ENCODE measurements at regions of chr6 and their contacts with region 1.

Region 1: GRCh38 chr6:160088069-160088783 is 33.4 kb upstream of the SLC22A1 start:
- DNase-seq: peak; percentile 89
- ATAC-seq: peak; percentile 97
- H3K4me3 ChIP-seq: no peak overlapping the region
- H3K27ac ChIP-seq: no peak overlapping the region
- H3K4me1 ChIP-seq: peaks cover 5% of the 10 kb centered on the region; the same call in 1 of the 2 replicates
- H3K27me3 ChIP-seq: no peaks in the 10 kb centered on the region
- CTCF ChIP-seq: peak; percentile 92
- POLR2A ChIP-seq: no peak
- RAD21 ChIP-seq: peak; percentile 76

Region 2: DNA sequence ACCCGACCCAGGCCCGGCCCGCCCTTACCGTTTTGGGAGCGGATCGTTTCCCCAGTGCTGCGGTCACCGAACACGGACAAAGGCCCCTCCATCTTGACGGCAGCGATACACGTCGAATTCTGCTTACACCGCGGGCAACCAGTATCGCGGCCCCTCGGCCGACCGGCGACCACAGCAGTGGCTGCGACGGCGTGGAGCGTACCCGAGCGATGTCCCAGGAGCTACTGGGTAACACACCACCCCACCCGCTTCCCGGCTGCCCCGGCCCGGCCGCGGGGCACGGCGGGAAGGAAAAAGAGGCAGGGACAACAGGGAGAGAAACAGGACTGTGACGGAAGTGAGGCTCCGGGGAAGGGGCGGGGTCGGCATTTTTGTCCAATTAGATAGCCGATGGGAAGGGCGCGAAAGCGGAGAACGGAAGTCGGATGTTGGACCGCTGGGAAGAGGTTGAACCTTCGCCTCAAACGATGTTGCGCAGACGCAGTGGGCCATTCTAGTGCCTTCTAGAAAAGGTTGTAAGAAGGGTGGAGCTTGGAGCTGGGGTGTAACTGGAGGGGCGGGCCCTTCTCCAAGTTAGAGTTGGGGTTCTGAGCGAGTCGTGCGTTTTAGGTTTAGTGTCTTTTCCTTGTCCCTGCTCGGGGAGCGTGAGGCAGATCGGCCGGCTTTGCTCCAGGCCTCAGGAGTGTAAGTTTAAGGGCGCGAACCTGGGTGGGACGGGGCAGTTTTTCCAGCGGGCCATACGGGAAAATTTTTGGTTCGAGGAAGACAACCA is 298.7 kb before region 1 on chr6 and contains the start of gene TCP1:
- CTCF ChIA-PET with region 1: no interaction called
- POLR2A ChIA-PET with region 1: no interaction called
- dilution Hi-C with region 1: no loop called
- in situ Hi-C with region 1: no loop called
- intact Hi-C with region 1: no loop called
- DNase-seq: peak; percentile 99
- ATAC-seq: peak; percentile 89
- H3K4me3 ChIP-seq: peak within 1 kb of the TSS; percentile 89
- H3K27ac ChIP-seq: peak within 1 kb of the TSS; percentile 91
- H3K4me1 ChIP-seq: peaks cover 4% of the 10 kb centered on the region
- H3K27me3 ChIP-seq: no peaks in the 10 kb centered on the region
- CTCF ChIP-seq: no peak
- POLR2A ChIP-seq: peak; percentile 95
- RAD21 ChIP-seq: no peak
- total RNA-seq, gene TCP1: 576 and 610 TPM in 2 replicates

Region 3: GRCh38 chr6:159862103-159862502 is 226.1 kb before region 1 on chr6:
- CTCF ChIA-PET with region 1: interaction called, 3 read pairs
- POLR2A ChIA-PET with region 1: no interaction called
- dilution Hi-C with region 1: no loop called
- in situ Hi-C with region 1: no loop called
- intact Hi-C with region 1: loop called (anchors 5 kb)
- DNase-seq: no peak
- ATAC-seq: no peak
- H3K4me3 ChIP-seq: no peak overlapping the region
- H3K27ac ChIP-seq: no peak overlapping the region
- H3K4me1 ChIP-seq: no peaks in the 10 kb centered on the region
- H3K27me3 ChIP-seq: peaks cover 2% of the 10 kb centered on the region
- CTCF ChIP-seq: no peak
- POLR2A ChIP-seq: no peak
- RAD21 ChIP-seq: no peak

Region 4: DNA sequence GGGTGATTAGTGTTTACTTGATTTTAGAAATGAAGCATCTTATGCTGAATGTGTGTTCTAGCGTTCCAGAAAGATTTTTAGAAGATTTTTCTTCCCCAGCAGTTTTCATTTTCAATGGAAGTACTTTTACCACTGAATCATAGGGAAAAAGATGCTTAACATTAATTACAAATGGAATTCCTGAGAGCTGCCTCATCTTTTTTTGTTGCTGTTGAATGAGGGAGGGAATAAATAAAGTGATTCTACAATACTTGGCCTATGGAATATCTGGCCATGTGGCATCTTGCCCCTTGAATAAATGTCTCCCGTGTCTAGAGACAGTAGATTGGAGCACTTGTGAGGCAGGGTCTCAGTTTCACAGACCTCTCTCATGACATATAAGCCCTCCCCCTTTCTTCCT is 10.7 kb before region 1 on chr6:
- CTCF ChIA-PET with region 1: interaction called, 17 read pairs
- POLR2A ChIA-PET with region 1: no interaction called
- dilution Hi-C with region 1: no loop called
- in situ Hi-C with region 1: no loop called
- intact Hi-C with region 1: no loop called
- DNase-seq: peak; percentile 71
- ATAC-seq: peak; percentile 83
- H3K4me3 ChIP-seq: no peak overlapping the region
- H3K27ac ChIP-seq: peak overlapping the region; percentile 40; the same call in 1 of the 2 replicates
- H3K4me1 ChIP-seq: peaks cover 14% of the 10 kb centered on the region
- H3K27me3 ChIP-seq: no peaks in the 10 kb centered on the region
- CTCF ChIP-seq: no peak
- POLR2A ChIP-seq: no peak
- RAD21 ChIP-seq: no peak

Region 5: DNA sequence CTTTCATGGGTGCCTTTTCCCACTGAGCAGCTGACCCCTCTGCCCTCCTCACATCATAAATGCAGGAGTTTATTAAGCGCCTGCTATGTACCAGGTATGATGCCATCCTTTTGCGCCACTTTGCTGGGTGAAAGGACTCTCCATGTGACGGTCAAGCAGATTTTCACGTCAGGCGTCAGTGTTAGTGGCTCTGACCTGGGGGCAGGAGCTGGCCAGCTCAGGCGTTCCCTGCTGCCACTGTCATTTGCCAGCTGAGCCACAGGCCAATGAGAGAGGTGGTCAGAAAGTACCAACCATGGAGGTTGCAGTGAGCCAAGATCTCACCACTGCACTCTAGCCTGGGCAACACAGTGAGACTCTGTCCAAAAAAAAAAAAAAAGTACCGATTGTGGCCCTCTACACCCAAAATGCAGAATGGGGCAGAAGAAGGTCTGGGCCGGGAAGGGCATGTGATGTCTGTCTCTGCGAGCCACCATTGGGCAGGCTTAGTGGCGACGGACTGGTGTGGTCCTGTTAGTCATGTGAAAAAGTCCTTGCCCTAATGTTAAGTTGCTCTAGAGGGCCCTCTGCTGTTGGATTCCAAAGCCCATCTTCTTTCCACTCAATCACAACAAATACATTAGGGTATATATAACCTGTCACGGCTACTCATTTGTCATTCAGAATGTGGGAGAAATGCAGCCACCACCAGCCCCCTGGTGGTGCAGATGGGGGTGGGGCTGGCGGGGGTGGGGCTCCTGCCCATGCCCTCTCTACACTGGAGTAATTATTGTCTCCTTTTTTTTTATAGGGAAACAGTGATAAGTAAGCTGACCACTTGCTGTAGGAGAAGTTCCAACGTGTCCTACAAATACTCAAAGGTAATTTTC is 15.0 kb after region 1 on chr6:
- CTCF ChIA-PET with region 1: interaction called, 11 read pairs
- POLR2A ChIA-PET with region 1: no interaction called
- dilution Hi-C with region 1: no loop called
- in situ Hi-C with region 1: no loop called
- intact Hi-C with region 1: no loop called
- DNase-seq: peak; percentile 11
- ATAC-seq: peak; percentile 59
- H3K4me3 ChIP-seq: no peak overlapping the region
- H3K27ac ChIP-seq: no peak overlapping the region
- H3K4me1 ChIP-seq: no peaks in the 10 kb centered on the region; the same call in 1 of the 2 replicates
- H3K27me3 ChIP-seq: no peaks in the 10 kb centered on the region
- CTCF ChIP-seq: peak; percentile 30; the same call in 1 of the 2 replicates
- POLR2A ChIP-seq: no peak
- RAD21 ChIP-seq: peak; percentile 21; the same call in 1 of the 2 replicates

Region 6: GRCh38 chr6:160137989-160138835 is 50.0 kb after region 1 on chr6:
- CTCF ChIA-PET with region 1: interaction called, 4 read pairs
- POLR2A ChIA-PET with region 1: interaction called, 3 read pairs
- dilution Hi-C with region 1: no loop called
- in situ Hi-C with region 1: no loop called
- intact Hi-C with region 1: loop called (anchors 2 kb)
- DNase-seq: peak; percentile 72
- ATAC-seq: peak; percentile 46
- H3K4me3 ChIP-seq: no peak overlapping the region
- H3K27ac ChIP-seq: no peak overlapping the region; the same call in 1 of the 2 replicates
- H3K4me1 ChIP-seq: peaks cover 12% of the 10 kb centered on the region
- H3K27me3 ChIP-seq: no peaks in the 10 kb centered on the region
- CTCF ChIP-seq: peak; percentile 76
- POLR2A ChIP-seq: no peak
- RAD21 ChIP-seq: peak; percentile 71

Region 7: DNA sequence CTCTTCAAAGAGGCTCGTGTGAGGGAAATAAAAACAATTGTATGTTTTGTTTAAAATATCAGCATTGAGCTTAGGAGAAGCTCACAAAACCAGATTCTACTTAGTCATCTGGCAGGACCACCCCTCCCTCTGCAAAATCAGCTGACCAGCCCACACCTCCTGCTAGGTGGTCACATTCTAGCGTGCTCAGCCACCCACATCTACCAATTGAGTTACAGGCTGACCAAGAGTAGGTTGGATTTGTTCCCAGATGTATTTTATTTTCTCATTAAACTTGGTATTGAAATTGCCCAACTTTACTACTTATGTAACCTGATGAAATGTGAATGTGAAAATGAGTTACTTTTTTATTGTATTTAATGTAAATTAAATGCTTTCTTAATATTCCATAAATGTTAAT is 114.2 kb after region 1 on chr6:
- CTCF ChIA-PET with region 1: no interaction called
- POLR2A ChIA-PET with region 1: no interaction called
- dilution Hi-C with region 1: no loop called
- in situ Hi-C with region 1: no loop called
- intact Hi-C with region 1: no loop called
- DNase-seq: no peak
- ATAC-seq: no peak
- H3K4me3 ChIP-seq: no peak overlapping the region
- H3K27ac ChIP-seq: no peak overlapping the region
- H3K4me1 ChIP-seq: no peaks in the 10 kb centered on the region
- H3K27me3 ChIP-seq: no peaks in the 10 kb centered on the region
- CTCF ChIP-seq: no peak
- POLR2A ChIP-seq: no peak
- RAD21 ChIP-seq: no peak

Region 8: DNA sequence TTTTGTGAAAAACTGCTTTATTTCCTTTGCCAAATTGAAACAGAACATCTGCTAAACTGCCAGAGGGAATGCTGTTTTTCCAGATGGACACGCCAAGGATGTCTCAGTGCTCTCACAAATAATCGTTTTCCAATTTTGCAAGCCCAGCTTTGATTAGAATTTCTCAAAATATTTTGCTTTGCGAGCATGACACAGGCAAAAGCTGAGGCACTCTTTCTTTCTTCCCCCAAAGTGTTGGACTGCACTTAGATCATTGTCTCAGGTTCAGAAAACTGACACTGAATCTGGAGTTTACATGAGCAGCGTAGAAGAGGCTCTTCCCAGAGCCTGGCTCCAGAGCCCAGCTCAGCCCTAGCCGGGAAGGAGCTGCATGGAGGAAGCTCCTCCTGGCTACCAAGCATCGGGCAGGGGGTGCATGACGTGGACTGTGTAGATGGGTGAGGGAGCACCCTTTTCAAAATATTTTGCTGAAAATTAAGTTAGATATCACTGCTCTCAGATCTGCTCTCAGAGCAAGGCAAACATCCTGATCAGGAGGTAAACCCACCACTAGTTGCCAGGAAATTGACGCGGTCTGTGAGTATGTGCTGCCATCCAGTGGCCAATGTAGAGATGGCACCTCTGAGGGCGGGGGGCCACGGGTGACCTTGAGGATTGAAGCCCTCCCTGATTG is 367.5 kb after region 1 on chr6:
- CTCF ChIA-PET with region 1: interaction called, 40 read pairs
- POLR2A ChIA-PET with region 1: no interaction called
- dilution Hi-C with region 1: no loop called
- in situ Hi-C with region 1: loop called (anchors 5 kb)
- intact Hi-C with region 1: loop called (anchors 1 kb)
- DNase-seq: peak; percentile 47
- ATAC-seq: peak; percentile 97
- H3K4me3 ChIP-seq: no peak overlapping the region; the same call in 1 of the 2 replicates
- H3K27ac ChIP-seq: peak overlapping the region; percentile 15; the same call in 1 of the 2 replicates
- H3K4me1 ChIP-seq: no peaks in the 10 kb centered on the region
- H3K27me3 ChIP-seq: no peaks in the 10 kb centered on the region
- CTCF ChIP-seq: peak; percentile 93
- POLR2A ChIP-seq: peak; percentile 55; the same call in 1 of the 2 replicates
- RAD21 ChIP-seq: peak; percentile 94

Region 9: GRCh38 chr6:160534050-160534696 is 445.9 kb after region 1 on chr6:
- CTCF ChIA-PET with region 1: interaction called, 7 read pairs
- POLR2A ChIA-PET with region 1: no interaction called
- dilution Hi-C with region 1: no loop called
- in situ Hi-C with region 1: no loop called
- intact Hi-C with region 1: loop called (anchors 1 kb)
- DNase-seq: peak; percentile 24
- ATAC-seq: peak; percentile 90
- H3K4me3 ChIP-seq: no peak overlapping the region
- H3K27ac ChIP-seq: no peak overlapping the region
- H3K4me1 ChIP-seq: no peaks in the 10 kb centered on the region
- H3K27me3 ChIP-seq: no peaks in the 10 kb centered on the region
- CTCF ChIP-seq: peak; percentile 73
- POLR2A ChIP-seq: no peak
- RAD21 ChIP-seq: peak; percentile 80